GM10248 (cell line): ENCODE measurements at regions of chr16 and their contacts with region 1.

Region 1: GRCh38 chr16:57413301-57413730 is 8.7 kb downstream of the CCL17 start:
- DNase-seq: peak; percentile 82
- CTCF ChIP-seq: no peak

Region 2: GRCh38 chr16:57289391-57290257 is 123.7 kb before region 1 on chr16:
- CTCF ChIA-PET with region 1: interaction called, 24 read pairs
- POLR2A ChIA-PET with region 1: no interaction called
- DNase-seq: no peak
- CTCF ChIP-seq: no peak

Region 3: GRCh38 chr16:57310801-57311200 is 102.5 kb before region 1 on chr16:
- CTCF ChIA-PET with region 1: interaction called, 454 read pairs
- POLR2A ChIA-PET with region 1: no interaction called
- DNase-seq: no peak
- CTCF ChIP-seq: no peak

Region 4: GRCh38 chr16:57358527-57359095 is 54.7 kb before region 1 on chr16 and contains the start of gene CCL22:
- CTCF ChIA-PET with region 1: interaction called, 37 read pairs
- POLR2A ChIA-PET with region 1: no interaction called
- DNase-seq: peak; percentile 82
- CTCF ChIP-seq: no peak

Region 5: DNA sequence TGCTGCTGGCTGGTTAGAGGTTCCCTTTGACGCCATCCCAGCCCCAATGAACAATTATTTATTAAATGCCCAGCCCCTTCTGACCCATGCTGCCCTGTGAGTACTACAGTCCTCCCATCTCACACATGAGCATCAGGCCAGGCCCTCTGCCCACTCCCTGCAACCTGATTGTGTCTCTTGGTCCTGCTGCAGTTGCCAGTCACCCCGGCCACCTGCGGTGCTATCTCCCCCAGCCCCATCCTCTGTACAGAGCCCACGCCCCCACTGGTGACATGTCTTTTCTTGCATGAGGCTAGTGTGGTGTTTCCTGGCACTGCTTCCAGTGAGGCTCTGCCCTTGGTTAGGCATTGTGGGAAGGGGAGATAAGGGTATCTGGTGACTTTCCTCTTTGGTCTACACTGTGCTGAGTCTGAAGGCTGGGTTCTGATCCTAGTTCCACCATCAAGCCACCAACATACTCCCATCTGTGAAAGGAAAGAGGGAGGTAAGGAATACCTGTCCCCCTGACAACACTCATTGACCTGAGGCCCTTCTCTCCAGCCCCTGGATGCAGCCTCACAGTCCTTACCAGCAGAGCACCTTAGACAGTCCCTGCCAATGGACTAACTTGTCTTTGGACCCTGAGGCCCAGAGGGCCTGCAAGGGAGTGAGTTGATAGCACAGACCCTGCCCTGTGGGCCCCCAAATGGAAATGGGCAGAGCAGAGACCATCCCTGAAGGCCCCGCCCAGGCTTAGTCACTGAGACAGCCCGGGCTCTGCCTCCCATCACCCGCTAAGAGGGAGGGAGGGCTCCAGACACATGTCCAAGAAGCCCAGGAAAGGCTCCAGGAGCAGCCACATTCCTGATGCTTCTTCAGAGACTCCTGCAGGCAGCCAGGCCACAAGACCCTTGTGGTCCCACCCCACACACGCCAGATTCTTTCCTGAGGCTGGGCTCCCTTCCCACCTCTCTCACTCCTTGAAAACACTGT is 29.8 kb before region 1 on chr16:
- CTCF ChIA-PET with region 1: interaction called, 29 read pairs
- POLR2A ChIA-PET with region 1: interaction called, 3 read pairs
- DNase-seq: no peak
- CTCF ChIP-seq: no peak

Region 6: DNA sequence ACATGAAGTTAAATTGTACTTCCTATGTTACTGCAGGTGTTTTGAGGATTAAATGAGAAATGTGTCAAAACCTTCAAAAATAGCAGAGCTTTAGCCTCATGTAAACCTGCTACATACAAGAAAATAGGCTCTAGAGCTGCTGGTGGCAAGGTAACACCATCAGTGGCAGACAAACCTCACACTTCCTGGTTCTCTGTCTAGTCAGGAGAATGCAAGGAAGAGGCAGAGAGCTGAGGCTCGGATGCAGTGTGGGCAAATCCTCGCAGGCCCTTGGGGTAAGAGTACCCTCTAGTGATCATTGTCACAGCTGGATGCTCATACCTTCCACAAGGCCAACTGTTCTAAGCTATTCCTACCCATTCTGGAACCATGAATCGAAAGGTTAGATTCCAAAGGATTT is 19.7 kb after region 1 on chr16:
- CTCF ChIA-PET with region 1: interaction called, 49 read pairs
- POLR2A ChIA-PET with region 1: no interaction called
- DNase-seq: no peak
- CTCF ChIP-seq: no peak

Region 7: GRCh38 chr16:57462209-57462977 is 49.1 kb after region 1 on chr16 and contains the start of gene POLR2C:
- CTCF ChIA-PET with region 1: interaction called, 14 read pairs
- POLR2A ChIA-PET with region 1: no interaction called
- DNase-seq: peak; percentile 94
- CTCF ChIP-seq: peak; percentile 98